ENCODE measurements at regions of chr11 and their contacts with region 1.

Region 1: DNA sequence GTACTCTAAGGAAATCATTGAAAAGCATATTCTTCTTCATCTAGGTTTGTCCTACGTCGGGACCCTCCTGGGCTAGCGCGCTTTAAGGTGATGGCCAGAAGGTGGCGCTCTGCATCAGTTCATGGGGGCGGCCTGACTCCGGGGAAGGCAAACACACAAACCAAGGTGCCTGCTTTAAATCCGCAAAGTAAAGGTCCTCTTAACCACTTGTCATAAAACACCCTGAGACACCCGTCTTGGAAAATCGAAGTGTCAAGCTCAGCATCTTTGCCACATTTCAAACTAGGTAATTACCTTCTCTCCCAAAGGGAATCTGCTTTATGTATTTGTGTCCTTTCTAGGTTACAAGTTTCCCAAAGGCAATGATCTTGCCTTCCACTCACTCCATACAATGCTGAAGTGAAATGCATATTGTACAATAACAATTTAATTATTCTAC is 33.9 kb downstream of the LMO2 start:
- DNase-seq: peak; percentile 81
- H3K4me3 ChIP-seq: no peak overlapping the region; a peak in 1 of 4 replicates
- H3K27ac ChIP-seq: no peak overlapping the region
- H3K4me1 ChIP-seq: peaks cover 0 to 5% of the 10 kb centered on the region in 2 experiments; a peak in 2 of 4 replicates
- H3K27me3 ChIP-seq: peaks cover 59% of the 10 kb centered on the region
- CTCF ChIP-seq: peak; percentile 93
- EP300 ChIP-seq: no peak
- RAD21 ChIP-seq: peak; percentile 90

Region 2: GRCh38 chr11:33819278-33819677 is 38.7 kb before region 1 on chr11:
- CTCF ChIA-PET with region 1: interaction called, 12 read pairs
- POLR2A ChIA-PET with region 1: no interaction called
- DNase-seq: no peak
- H3K4me3 ChIP-seq: no peak overlapping the region
- H3K27ac ChIP-seq: no peak overlapping the region
- H3K4me1 ChIP-seq: no peaks in the 10 kb centered on the region
- H3K27me3 ChIP-seq: peaks cover 18% of the 10 kb centered on the region
- CTCF ChIP-seq: no peak
- EP300 ChIP-seq: no peak
- RAD21 ChIP-seq: no peak

Region 3: DNA sequence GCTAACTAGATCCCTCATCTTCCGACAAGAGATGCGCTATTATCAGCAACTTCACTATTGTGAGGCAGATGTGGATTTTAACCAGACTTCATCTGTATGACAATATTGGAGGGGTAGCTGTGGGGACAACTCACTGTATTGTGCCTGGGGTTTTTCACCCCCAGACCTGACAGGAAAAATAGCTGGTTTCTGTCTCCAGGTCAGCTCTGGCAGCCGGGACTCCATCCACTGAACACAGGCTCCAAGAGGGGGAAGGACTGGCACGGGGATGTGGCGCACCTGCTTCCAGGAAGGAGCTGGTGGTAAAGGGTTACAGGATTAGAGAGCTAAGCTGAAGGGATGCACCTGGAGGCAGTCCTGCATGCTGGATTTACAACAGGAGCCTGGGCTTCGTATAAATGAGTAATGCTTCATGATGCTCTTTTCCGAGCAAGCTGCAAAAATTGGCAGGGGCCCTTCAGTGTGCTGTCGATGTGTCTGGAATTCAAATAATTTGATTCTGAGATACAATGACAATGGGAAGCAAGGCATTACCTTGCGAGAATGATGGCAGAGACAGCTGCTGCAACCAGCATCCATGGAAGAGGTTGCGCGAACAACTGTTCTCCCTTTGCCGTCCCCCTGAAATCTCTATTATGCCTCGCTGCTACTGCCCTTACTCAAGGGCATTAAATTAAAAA is 15.6 kb before region 1 on chr11:
- CTCF ChIA-PET with region 1: interaction called, 36 read pairs
- POLR2A ChIA-PET with region 1: interaction called, 3 read pairs
- DNase-seq: peak; percentile 53
- H3K4me3 ChIP-seq: peak overlapping the region in 1 of 2 experiments; percentile 35; a peak in 2 of 4 replicates
- H3K27ac ChIP-seq: peak overlapping the region in 1 of 2 experiments; percentile 47; a peak in 2 of 4 replicates
- H3K4me1 ChIP-seq: peaks cover 7 to 9% of the 10 kb centered on the region in 2 experiments; a peak in 3 of 4 replicates
- H3K27me3 ChIP-seq: peaks cover 39% of the 10 kb centered on the region
- CTCF ChIP-seq: no peak
- EP300 ChIP-seq: no peak
- RAD21 ChIP-seq: no peak

Region 4: GRCh38 chr11:33874910-33875490 is 17.0 kb after region 1 on chr11:
- CTCF ChIA-PET with region 1: interaction called, 64 read pairs
- POLR2A ChIA-PET with region 1: no interaction called
- DNase-seq: no peak
- H3K4me3 ChIP-seq: no peak overlapping the region
- H3K27ac ChIP-seq: no peak overlapping the region
- H3K4me1 ChIP-seq: peaks cover 3 to 7% of the 10 kb centered on the region in 2 experiments; a peak in 2 of 4 replicates
- H3K27me3 ChIP-seq: peaks cover 53% of the 10 kb centered on the region
- CTCF ChIP-seq: no peak
- EP300 ChIP-seq: no peak
- RAD21 ChIP-seq: no peak

Region 5: GRCh38 chr11:33976495-33977199 is 118.7 kb after region 1 on chr11:
- CTCF ChIA-PET with region 1: interaction called, 61 read pairs
- POLR2A ChIA-PET with region 1: no interaction called
- DNase-seq: no peak
- H3K4me3 ChIP-seq: no peak overlapping the region
- H3K27ac ChIP-seq: no peak overlapping the region
- H3K4me1 ChIP-seq: peaks cover 0 to 11% of the 10 kb centered on the region in 2 experiments; a peak in 1 of 4 replicates
- H3K27me3 ChIP-seq: peaks cover 8% of the 10 kb centered on the region; the same call in 1 of the 2 replicates
- CTCF ChIP-seq: no peak
- EP300 ChIP-seq: no peak
- RAD21 ChIP-seq: no peak

Region 6: DNA sequence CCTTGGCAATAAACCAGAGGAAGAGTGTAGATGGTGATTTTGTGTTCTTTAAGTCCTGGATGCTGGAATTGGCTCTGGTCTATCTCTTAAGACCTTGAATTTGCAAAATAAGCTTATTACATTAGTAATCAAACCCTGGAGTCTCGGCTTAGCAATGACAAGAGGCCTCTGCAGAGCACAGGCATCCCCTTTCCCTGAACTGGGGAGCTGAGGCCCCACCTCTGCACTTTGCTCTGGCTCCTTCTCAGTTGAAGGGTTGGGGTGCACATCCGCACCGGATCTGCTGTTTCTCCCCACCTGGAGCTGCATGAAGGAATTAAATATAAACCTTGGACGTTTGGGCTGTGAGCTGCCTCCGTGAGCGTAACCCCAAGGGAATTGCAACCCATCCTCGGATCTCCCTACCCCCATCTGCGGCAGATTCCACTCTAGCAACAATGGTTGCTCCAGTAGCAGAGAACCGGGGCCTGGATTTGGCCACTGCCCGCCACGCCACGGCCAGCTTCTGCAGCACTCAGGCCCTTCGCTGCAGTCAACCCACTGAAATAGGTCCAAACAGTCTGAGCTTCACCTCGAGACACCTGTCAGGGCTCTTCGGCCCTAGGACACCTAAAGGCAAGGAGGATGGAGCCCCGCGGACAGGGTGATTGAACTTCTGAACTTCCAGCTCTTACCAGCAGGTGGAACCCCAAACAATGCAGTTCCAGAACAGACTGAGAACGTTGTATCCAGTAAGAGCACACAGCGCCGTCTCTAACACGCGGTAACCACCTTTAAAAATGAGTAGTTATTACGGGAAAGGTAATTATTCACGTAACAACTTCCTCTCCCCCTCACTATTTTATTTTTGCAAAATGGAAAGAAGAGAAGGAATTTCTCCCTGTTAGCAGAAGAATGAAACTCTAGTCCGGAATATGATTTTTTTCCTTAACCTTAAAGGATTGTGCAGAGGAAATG is 138.8 kb after region 1 on chr11:
- CTCF ChIA-PET with region 1: interaction called, 20 read pairs
- POLR2A ChIA-PET with region 1: no interaction called
- DNase-seq: peak; percentile 80
- H3K4me3 ChIP-seq: no peak overlapping the region
- H3K27ac ChIP-seq: no peak overlapping the region
- H3K4me1 ChIP-seq: peaks cover 6 to 30% of the 10 kb centered on the region in 2 experiments; a peak in 2 of 4 replicates
- H3K27me3 ChIP-seq: peaks cover 14% of the 10 kb centered on the region; the same call in 1 of the 2 replicates
- CTCF ChIP-seq: peak; percentile 79
- EP300 ChIP-seq: no peak
- RAD21 ChIP-seq: peak; percentile 84

Measured in SK-N-SH (cell line).